Left colon (tissue), 2 donors: ENCODE measurements at regions of chr18 and their contacts with region 1.

Region 1: GRCh38 chr18:2981212-2981728 is 31.7 kb downstream of the LPIN2 start:
- DNase-seq: no peak
- ATAC-seq: no peak

Region 2: GRCh38 chr18:2948038-2948437 is 33.2 kb before region 1 on chr18:
- intact Hi-C with region 1: loop called in 1 of 2 experiments (anchors 5 kb)
- DNase-seq: no peak
- ATAC-seq: peak; percentile 66

Region 3: DNA sequence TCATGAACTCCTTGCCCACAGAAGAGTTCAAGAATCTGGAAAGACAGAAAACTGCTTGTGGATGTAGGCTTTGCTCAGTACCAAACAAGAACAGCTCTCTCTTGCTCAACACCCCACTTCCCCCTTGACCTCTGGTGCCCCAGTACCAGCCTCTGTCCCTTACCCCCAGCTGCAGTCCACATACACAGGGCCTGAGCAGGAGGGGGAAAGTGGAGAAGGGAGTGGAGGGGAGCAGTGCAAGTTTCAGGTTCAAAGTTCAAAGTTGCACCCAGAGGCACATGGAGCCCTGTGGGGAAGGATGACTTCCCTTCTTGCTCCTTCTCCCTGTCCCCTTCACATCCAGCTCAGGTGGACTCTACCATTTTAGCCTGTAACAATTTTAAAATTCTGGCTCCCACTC is 92.8 kb after region 1 on chr18:
- intact Hi-C with region 1: no loop called
- DNase-seq: no peak
- ATAC-seq: peak; percentile 96